ENCODE measurements at regions of chr10 and their contacts with region 1.

Region 1: DNA sequence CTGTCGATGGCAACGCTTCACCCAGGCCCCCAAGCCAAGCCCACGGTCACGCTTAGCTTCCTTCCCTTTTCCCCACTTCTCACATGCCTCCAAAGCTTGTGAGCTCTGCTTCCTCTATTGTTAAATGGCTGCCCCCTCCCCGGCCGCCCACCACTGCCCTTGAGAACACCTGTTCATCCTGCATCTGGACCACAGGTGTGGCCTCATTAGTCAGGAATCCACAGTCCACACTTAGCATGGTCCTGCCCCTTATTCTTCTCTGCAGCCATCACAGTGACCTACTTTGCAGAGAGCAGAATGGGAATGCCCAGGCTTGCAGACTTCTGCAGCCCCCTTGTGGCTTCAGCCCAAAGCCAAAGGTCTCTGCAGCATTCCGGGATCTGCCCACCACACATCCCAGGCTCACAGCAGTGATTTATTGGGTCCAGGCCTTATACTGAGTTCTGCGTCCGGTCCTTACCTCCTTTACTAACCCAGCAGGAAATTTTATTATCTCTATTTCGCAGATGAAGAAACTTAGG is 66.9 kb downstream of the PTPRE start:
- DNase-seq: no peak
- H3K4me3 Mint-ChIP-seq: no peak overlapping the region
- H3K27ac Mint-ChIP-seq: no peak overlapping the region
- H3K4me1 Mint-ChIP-seq: peaks cover 18% of the 10 kb centered on the region
- H3K27me3 Mint-ChIP-seq: no peaks in the 10 kb centered on the region
- CTCF ChIP-seq: no peak

Region 2: GRCh38 chr10:127228195-127228787 is 745.6 kb before region 1 on chr10:
- CTCF ChIA-PET with region 1: interaction called, 15 read pairs
- intact Hi-C with region 1: no loop called
- DNase-seq: no peak
- H3K4me3 Mint-ChIP-seq: no peak overlapping the region
- H3K27ac Mint-ChIP-seq: no peak overlapping the region
- H3K4me1 Mint-ChIP-seq: no peaks in the 10 kb centered on the region
- H3K27me3 Mint-ChIP-seq: no peaks in the 10 kb centered on the region
- CTCF ChIP-seq: no peak

Measured in Calu3 (cell line).